ENCODE measurements at regions of chr20 and their contacts with region 1.

Region 1: DNA sequence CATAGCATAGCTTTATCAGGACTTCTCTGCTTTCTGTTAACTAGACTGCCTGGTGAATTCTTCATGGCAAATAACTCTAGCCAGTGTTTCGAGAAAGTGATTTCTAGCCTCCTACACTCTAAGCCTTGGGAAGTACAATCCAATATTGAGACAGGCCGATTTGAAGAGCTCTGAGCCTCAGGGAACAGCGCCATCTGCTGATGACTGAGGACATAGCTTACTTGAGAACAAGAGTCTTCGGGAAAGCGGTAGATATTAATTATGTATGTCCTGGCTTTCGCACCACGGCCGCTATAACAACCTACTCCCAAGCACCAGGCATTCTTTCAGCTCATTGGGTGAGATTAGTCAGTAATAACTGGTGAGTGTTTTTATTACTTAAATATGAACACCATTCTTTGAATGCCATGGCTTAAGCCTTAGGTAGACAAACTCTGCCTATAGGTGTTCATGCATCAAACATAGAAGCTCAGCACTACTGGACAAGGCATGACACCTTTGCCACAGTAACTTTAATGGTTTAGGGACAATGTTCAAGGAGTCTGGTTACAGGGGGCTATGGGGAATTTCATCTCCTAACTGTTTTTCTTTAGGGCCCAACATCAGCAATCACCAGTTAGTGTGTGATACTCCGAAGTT is 518.6 kb downstream of the BMP2 start:
- DNase-seq: peak; percentile 80
- ATAC-seq: peak; percentile 98
- H3K4me3 ChIP-seq: no peak overlapping the region
- H3K27ac ChIP-seq: no peak overlapping the region
- H3K4me1 ChIP-seq: no peaks in the 10 kb centered on the region
- H3K27me3 ChIP-seq: no peaks in the 10 kb centered on the region
- CTCF ChIP-seq: peak; percentile 94
- EP300 ChIP-seq: no peak
- POLR2A ChIP-seq: no peak
- RAD21 ChIP-seq: peak; percentile 78

Region 2: DNA sequence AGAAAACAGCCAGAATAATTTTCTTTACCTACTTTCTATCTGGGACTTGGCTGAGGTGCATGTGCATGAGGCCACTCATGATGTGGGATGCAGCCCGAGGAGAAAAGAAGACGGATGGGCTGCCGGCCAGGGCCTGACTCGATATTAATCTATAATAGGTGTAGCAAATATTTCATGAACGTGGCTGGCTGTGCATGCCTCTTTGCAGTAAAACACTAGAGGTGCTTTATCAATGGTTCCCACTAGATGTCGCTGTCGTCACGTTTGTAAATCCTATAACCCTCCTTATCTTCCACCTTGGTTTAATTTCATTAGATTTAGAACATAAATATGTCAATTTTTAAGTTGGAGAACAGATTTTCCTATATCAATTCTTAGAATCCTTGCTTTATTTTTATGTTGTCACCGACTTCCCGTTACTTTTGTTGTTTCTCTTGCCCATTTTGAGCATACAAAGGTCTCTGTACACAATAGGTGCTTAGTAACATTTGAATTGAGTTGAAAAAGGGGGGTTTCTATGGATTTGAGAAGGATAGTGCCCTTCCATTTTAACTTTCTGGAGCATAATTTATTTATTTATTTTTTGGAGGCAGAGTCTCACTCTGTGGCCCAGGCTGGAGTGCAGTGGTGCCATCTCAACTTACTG is 1143.6 kb before region 1 on chr20:
- CTCF ChIA-PET with region 1: interaction called, 5 read pairs
- POLR2A ChIA-PET with region 1: no interaction called
- in situ Hi-C with region 1: loop called (anchors 25 kb)
- intact Hi-C with region 1: no loop called
- DNase-seq: peak; percentile 70
- ATAC-seq: peak; percentile 89
- H3K4me3 ChIP-seq: no peak overlapping the region
- H3K27ac ChIP-seq: no peak overlapping the region
- H3K4me1 ChIP-seq: no peaks in the 10 kb centered on the region
- H3K27me3 ChIP-seq: no peaks in the 10 kb centered on the region
- CTCF ChIP-seq: peak; percentile 87
- EP300 ChIP-seq: no peak
- POLR2A ChIP-seq: no peak
- RAD21 ChIP-seq: no peak; the same call in 1 of the 2 replicates

Region 3: DNA sequence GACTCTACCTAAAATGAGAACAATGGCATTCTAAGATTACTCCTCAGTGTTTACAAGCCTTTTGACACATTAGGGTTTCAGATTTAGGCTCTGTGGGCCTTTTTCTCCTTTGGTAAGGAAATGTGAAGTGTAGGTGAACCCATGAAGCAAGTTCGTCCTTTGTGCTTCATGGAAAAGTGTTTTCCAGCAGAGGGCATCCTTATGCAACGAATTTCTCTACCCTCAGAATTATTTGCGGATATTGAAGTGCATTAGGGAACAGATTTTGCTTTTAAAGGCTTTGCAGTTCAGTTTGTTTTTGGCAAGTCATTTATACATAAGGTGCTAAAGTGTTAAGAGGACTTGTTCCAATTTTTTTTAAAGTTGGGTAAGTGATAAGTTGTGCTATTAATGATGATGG is 1107.5 kb before region 1 on chr20:
- CTCF ChIA-PET with region 1: no interaction called
- POLR2A ChIA-PET with region 1: no interaction called
- in situ Hi-C with region 1: no loop called
- intact Hi-C with region 1: loop called (anchors 5 kb)
- DNase-seq: peak; percentile 39
- ATAC-seq: peak; percentile 61
- H3K4me3 ChIP-seq: no peak overlapping the region
- H3K27ac ChIP-seq: no peak overlapping the region
- H3K4me1 ChIP-seq: no peaks in the 10 kb centered on the region
- H3K27me3 ChIP-seq: no peaks in the 10 kb centered on the region
- CTCF ChIP-seq: peak; percentile 74
- EP300 ChIP-seq: no peak
- POLR2A ChIP-seq: no peak
- RAD21 ChIP-seq: 0 out of 2 replicates have a peak, but pooled peaks have one; percentile 14

Region 4: DNA sequence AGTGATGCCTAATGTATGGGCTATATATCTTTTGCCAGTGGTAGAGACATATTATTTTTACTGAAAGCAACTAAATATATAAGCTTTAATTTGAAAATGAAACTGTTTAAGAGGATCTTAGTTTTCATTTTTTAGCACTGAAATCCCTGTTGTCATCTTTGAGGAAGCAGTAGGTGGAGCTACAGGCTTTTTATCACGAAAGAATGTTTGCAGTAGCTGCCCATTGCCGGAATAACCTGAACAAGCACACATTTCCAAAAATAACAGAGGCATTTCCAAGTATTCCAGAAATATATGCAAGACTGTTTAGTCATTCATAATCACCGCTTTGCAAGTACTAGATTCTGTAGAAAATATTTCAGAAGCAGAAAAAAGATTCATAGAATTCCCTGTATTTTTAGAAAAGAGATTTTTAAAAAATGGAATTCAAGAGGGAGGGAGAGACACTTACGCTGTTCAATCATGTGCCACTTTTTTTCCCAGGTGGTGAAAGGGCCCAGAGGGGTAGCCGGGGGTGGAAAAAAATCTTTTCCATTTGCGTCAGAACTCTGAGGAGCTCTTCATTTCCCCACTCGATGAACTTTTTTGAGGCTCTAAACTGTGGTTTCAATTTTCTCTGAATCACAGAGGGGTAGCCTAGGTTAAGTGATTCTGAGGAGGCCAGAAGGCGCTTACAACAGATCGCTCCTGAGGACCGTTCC is 1020.7 kb before region 1 on chr20:
- CTCF ChIA-PET with region 1: no interaction called
- POLR2A ChIA-PET with region 1: no interaction called
- in situ Hi-C with region 1: no loop called
- intact Hi-C with region 1: loop called (anchors 10 kb)
- DNase-seq: peak; percentile 55
- ATAC-seq: peak; percentile 68
- H3K4me3 ChIP-seq: no peak overlapping the region
- H3K27ac ChIP-seq: no peak overlapping the region
- H3K4me1 ChIP-seq: no peaks in the 10 kb centered on the region
- H3K27me3 ChIP-seq: peaks cover 0 to 2% of the 10 kb centered on the region in 2 experiments; a peak in 1 of 5 replicates
- CTCF ChIP-seq: peak; percentile 67
- EP300 ChIP-seq: no peak
- POLR2A ChIP-seq: no peak
- RAD21 ChIP-seq: peak; percentile 62; the same call in 1 of the 2 replicates

Region 5: DNA sequence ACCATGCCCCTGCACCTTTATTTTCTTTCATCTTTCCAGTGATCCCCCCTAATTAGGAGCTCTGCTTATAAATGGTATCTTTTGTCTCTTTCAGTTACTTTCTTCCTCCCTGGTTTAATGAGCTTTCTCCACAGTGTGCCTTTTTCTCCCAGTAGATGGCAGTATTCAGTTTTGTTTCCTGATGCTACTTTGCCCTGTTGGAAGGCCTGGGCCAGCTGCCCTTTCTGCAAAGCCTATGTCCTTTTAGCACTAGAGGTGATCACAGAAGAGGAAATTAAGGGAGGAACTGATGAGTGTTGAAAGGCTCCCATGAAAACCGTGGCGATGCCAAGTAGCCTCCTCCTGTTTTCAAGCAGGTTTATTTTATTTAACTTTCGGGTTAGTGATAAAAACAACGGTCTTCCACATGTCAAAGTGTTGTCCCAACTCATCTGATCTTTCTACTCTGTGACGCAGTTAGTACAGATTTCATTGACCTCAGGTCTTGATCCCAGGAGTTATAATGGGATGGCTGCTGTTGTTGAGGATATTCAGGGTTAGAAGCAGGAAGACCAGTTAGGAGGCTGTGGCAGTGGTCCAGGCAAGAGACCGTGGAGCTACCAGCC is 702.8 kb before region 1 on chr20:
- CTCF ChIA-PET with region 1: no interaction called
- POLR2A ChIA-PET with region 1: no interaction called
- in situ Hi-C with region 1: no loop called
- intact Hi-C with region 1: loop called (anchors 2 kb)
- DNase-seq: peak; percentile 61
- ATAC-seq: peak; percentile 97
- H3K4me3 ChIP-seq: no peak overlapping the region
- H3K27ac ChIP-seq: no peak overlapping the region
- H3K4me1 ChIP-seq: no peaks in the 10 kb centered on the region
- H3K27me3 ChIP-seq: no peaks in the 10 kb centered on the region
- CTCF ChIP-seq: peak; percentile 89
- EP300 ChIP-seq: no peak
- POLR2A ChIP-seq: no peak
- RAD21 ChIP-seq: no peak; the same call in 1 of the 2 replicates

Region 6: DNA sequence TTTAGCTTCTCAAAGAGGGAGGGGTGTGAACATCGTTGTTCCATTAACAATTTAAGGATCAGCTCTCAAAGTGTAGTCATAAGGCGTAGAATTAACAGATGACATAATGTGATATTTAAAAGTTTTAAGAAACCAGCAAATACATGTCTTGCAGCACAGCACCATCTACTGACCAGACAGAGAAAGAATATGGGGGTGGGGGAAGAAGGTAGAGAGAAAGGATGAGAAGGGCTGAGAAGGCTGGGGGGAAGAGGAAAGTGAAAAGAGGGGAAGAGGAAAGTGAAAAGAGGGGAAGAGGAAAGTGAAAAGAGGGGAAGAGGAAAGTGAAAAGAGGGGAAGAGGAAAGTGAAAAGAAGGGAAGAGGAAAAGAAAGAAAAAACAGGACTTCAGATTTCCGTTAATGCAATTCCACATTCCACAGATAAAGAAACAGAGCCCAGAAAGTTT is 573.3 kb after region 1 on chr20:
- CTCF ChIA-PET with region 1: no interaction called
- POLR2A ChIA-PET with region 1: no interaction called
- in situ Hi-C with region 1: no loop called
- intact Hi-C with region 1: loop called (anchors 1 kb)
- DNase-seq: peak; percentile 47
- ATAC-seq: peak; percentile 79
- H3K4me3 ChIP-seq: no peak overlapping the region
- H3K27ac ChIP-seq: no peak overlapping the region
- H3K4me1 ChIP-seq: no peaks in the 10 kb centered on the region
- H3K27me3 ChIP-seq: no peaks in the 10 kb centered on the region
- CTCF ChIP-seq: peak; percentile 86
- EP300 ChIP-seq: no peak
- POLR2A ChIP-seq: no peak
- RAD21 ChIP-seq: peak; percentile 67

Measured in HepG2 (cell line).